Caco-2 (cell line): ENCODE measurements at regions of chr2 and their contacts with region 1.

Region 1: GRCh38 chr2:196277002-196277401 is 105.6 kb upstream of the STK17B start:
- DNase-seq: peak in 1 of 2 experiments; percentile 14
- H3K4me3 ChIP-seq: no peak overlapping the region
- H3K4me3 Mint-ChIP-seq: no peak overlapping the region
- H3K27ac Mint-ChIP-seq: no peak overlapping the region
- H3K4me1 ChIP-seq: peaks cover 48% of the 10 kb centered on the region
- H3K4me1 Mint-ChIP-seq: peaks cover 38% of the 10 kb centered on the region
- H3K27me3 ChIP-seq: no peaks in the 10 kb centered on the region
- H3K27me3 Mint-ChIP-seq: no peaks in the 10 kb centered on the region
- CTCF ChIP-seq: peak; percentile 46 to 50

Region 2: DNA sequence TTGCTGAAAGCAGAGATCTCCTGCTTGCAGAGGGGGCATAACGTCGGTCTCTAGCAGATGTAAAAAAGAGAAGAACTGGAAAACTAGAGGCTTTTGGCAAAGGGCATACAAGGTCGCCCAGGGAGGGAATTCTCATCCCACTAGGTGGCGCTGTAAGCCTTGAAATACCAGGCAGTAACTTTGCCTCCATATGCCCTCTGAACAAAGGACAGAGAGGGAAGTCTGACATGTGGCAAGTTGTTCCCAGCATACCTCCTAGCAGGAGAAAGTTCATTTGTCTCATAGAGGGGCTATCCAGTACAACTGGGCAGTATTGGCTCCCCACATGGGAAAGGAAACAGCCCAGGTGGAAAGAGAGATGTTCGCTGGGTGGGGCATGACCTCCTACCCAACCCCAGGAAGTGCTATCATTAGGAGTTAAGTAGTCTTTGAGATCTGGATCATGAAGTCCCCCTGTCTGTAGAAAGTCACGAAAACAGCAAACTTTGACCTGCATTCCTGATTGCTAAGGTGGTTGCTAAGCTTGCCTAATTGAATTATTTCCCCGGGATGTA is 145.5 kb before region 1 on chr2:
- CTCF ChIA-PET with region 1: interaction called, 3 read pairs
- POLR2A ChIA-PET with region 1: no interaction called
- intact Hi-C with region 1: loop called (anchors 1 kb)
- DNase-seq: peak; percentile 58 to 72
- H3K4me3 ChIP-seq: no peak overlapping the region
- H3K4me3 Mint-ChIP-seq: no peak overlapping the region
- H3K27ac Mint-ChIP-seq: peak overlapping the region; percentile 66
- H3K4me1 ChIP-seq: no peaks in the 10 kb centered on the region
- H3K4me1 Mint-ChIP-seq: no peaks in the 10 kb centered on the region
- H3K27me3 ChIP-seq: no peaks in the 10 kb centered on the region
- H3K27me3 Mint-ChIP-seq: no peaks in the 10 kb centered on the region
- CTCF ChIP-seq: peak in 1 of 2 experiments; percentile 68

Region 3: DNA sequence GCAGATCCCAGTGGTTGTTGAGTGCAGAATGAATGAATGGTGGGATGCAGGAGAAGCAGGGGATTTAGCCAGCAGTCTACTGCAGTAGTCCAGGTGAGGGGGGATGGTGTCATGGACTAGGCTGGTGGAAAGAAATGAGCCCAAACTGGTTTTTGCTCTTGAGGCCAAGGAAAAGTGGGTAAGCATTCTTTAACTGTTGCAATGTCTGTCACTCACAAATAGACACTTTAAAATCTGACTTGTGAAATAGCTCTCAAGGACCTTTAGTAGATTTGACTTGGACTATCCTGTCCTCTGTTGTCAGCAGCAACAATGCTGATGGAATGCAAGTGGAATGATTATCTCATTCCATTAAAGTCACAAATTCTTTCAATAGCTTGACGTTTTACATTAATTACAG is 68.1 kb before region 1 on chr2:
- CTCF ChIA-PET with region 1: no interaction called
- POLR2A ChIA-PET with region 1: no interaction called
- intact Hi-C with region 1: loop called (anchors 1 kb)
- DNase-seq: peak; percentile 78 to 85
- H3K4me3 ChIP-seq: no peak overlapping the region
- H3K4me3 Mint-ChIP-seq: peak overlapping the region; percentile 51
- H3K27ac Mint-ChIP-seq: peak overlapping the region; percentile 89
- H3K4me1 ChIP-seq: peaks cover 37% of the 10 kb centered on the region
- H3K4me1 Mint-ChIP-seq: peaks cover 26% of the 10 kb centered on the region
- H3K27me3 ChIP-seq: no peaks in the 10 kb centered on the region
- H3K27me3 Mint-ChIP-seq: no peaks in the 10 kb centered on the region
- CTCF ChIP-seq: no peak

Region 4: DNA sequence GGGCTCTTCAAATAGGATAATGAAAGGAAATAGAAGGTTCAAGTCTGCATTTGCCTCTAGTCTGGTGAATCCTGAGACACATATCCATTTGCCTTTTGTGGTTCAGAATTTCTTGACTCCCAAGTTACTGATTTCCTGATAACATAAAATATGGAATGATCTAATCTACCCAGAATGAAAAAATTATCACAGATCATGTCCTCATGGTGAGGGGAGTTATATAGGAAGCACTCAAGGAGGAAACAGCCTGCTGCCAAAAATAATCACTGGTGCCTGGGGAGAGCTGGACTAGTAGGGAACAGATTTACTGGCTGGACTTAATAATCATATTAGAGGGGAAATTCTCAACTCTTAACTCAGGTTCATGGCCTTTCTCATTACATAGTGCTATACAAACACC is 10.1 kb before region 1 on chr2:
- CTCF ChIA-PET with region 1: no interaction called
- POLR2A ChIA-PET with region 1: no interaction called
- intact Hi-C with region 1: loop called (anchors 1 kb)
- DNase-seq: no peak
- H3K4me3 ChIP-seq: no peak overlapping the region
- H3K4me3 Mint-ChIP-seq: no peak overlapping the region
- H3K27ac Mint-ChIP-seq: no peak overlapping the region
- H3K4me1 ChIP-seq: peaks cover 37% of the 10 kb centered on the region
- H3K4me1 Mint-ChIP-seq: peaks cover 19% of the 10 kb centered on the region
- H3K27me3 ChIP-seq: no peaks in the 10 kb centered on the region
- H3K27me3 Mint-ChIP-seq: no peaks in the 10 kb centered on the region
- CTCF ChIP-seq: no peak

Region 5: GRCh38 chr2:196331143-196331542 is 54.1 kb after region 1 on chr2:
- CTCF ChIA-PET with region 1: no interaction called
- POLR2A ChIA-PET with region 1: no interaction called
- intact Hi-C with region 1: no loop called
- DNase-seq: no peak
- H3K4me3 ChIP-seq: no peak overlapping the region
- H3K4me3 Mint-ChIP-seq: no peak overlapping the region
- H3K27ac Mint-ChIP-seq: no peak overlapping the region
- H3K4me1 ChIP-seq: peaks cover 16% of the 10 kb centered on the region
- H3K4me1 Mint-ChIP-seq: peaks cover 19% of the 10 kb centered on the region
- H3K27me3 ChIP-seq: no peaks in the 10 kb centered on the region
- H3K27me3 Mint-ChIP-seq: no peaks in the 10 kb centered on the region
- CTCF ChIP-seq: no peak